GM10248 (cell line): ENCODE measurements at regions of chr7 and their contacts with region 1.

Region 1: GRCh38 chr7:100407285-100408180 is 21.0 kb downstream of the ZCWPW1 start:
- DNase-seq: peak; percentile 74
- CTCF ChIP-seq: peak; percentile 64

Region 2: DNA sequence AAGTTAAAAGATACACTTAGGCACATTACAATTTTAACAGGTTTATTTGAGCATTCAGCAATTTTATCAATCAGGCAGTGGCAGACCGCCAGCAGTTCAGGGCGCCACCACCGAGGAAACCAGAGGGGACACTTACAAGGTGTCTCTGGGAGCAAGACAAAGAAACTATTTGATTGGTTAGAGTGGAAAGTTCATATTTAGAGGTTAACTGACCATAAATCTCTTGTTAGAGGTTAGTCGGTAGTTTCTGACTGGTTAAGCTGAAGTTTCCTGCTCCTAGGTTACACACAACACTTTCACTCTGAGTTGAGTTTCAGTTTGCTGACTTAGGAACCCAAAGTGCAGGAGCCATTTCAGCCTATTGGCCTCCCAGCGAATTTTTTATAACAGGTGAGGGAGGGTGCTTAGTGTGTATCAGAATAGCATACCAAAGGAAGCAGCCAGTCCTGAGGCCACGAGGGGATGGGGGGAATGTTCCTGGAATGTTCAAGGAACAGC is 198.6 kb before region 1 on chr7:
- CTCF ChIA-PET with region 1: interaction called, 12 read pairs
- POLR2A ChIA-PET with region 1: no interaction called
- DNase-seq: peak; percentile 75
- CTCF ChIP-seq: no peak

Region 3: DNA sequence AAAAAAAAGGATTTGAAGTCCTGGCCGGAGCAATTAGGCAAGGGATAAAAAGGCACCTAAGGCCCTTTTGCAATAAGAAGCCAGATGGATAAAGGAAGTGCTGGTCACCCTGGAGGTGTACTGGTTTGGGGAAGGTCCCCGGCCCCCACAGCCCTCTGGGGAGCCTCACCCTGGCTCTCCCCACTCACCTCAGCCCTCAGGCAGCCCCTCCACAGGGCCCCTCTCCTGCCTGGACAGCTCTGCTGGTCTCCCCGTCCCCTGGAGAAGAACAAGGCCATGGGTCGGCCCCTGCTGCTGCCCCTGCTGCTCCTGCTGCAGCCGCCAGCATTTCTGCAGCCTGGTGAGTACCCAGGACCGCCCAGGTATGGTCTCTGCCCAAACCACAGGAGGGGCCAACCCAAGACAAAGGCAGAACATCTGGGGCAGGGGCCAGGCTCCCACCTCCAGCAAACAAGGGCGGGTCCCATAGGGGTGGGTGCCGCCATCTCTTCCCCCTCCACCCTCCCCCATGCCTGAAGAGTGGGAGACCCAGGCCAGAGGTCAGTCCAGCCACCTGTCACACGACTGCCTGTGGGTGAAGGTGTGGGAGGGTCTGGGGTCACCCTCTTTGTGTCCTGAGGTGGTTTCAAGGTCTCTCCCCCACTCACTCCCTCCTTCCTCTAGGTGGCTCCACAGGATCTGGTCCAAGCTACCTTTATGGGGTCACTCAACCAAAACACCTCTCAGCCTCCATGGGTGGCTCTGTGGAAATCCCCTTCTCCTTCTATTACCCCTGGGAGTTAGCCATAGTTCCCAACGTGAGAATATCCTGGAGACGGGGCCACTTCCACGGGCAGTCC is 49.3 kb before region 1 on chr7 and contains the start of gene PILRB:
- CTCF ChIA-PET with region 1: interaction called, 16 read pairs
- POLR2A ChIA-PET with region 1: no interaction called
- DNase-seq: no peak
- CTCF ChIP-seq: peak; percentile 21

Region 4: GRCh38 chr7:100390286-100391009 is 17.1 kb before region 1 on chr7:
- CTCF ChIA-PET with region 1: interaction called, 26 read pairs
- POLR2A ChIA-PET with region 1: no interaction called
- DNase-seq: no peak
- CTCF ChIP-seq: no peak

Region 5: DNA sequence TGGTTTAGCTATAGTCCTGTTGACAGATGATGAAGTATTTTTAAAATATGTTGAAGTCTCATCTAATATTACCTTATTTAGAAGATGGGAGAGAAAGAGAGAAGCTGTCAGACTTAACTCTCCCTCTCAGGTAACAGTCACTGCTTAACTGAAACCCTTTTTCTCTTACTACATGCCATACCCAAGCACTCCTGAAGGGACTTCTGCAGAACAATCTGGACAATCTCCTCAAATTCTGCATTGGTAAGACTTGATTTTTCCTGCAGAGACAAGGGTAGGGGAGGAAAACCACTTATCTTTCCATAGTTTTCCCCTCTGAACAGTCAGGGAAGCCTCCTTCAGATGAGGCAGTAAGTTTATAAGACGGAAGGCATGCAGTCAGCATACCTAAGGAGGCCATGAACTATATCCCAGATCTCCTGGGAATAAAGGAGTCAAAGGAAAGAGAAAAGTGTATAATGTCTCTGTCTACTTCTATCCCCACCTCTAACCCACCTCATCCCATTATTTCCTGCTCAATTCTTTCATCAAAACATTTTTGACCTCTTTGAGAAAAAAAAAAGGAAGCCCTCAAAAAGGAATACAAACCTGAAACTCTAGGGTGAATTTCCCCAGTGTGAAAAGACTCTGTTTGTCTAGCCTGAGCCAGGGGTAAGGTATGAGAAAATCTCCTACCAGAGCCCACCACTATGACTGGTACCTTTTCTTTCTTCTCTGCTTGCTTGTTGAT is 11.6 kb after region 1 on chr7:
- CTCF ChIA-PET with region 1: interaction called, 44 read pairs
- POLR2A ChIA-PET with region 1: no interaction called
- DNase-seq: no peak
- CTCF ChIP-seq: no peak